CD4-positive, alpha-beta memory T cell (primary cell): ENCODE measurements at regions of chr7 and their contacts with region 1.

Region 1: DNA sequence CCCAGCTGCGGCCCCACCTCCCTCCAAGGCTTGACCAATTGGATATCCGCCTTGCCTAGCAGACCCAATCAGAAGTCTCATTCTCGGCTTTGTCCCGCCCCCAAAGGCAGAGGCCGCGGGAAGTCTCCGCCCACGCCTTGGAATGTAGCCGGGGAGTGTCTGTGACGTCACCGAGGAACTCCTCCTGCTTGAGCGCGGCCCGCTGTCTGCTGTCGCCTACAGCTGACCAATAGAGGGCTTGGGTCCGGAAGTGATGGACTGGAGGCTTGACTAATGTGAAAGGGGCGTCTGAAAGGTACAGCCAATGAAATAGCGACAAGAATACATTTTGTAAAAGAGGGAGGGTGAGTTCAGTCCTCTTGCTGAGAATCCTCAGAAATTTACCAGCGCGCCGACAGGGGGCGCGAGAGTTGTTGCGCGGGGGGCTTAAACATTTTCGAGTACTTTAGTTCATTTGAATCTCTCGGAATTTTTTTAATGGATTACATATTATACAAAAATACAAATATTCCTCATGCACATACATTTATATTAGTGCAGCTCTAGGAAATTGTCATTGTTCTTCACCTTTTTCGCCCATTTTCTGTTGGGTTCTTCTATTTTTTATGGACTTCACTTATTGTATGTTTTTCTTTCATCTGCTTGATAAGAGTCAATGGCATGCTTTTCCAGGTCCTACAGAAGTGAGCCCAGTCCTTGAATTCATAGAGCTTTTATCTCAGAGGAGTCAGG is 376 bp upstream of the CREB3L2 start:
- DNase-seq: peak; percentile 98 to 99 (median 99)
- H3K4me3 ChIP-seq: peak overlapping the region; percentile 86 to 99
- H3K4me3 Mint-ChIP-seq: peak overlapping the region; percentile 93 to 98 (median 95)
- H3K27ac ChIP-seq: peak overlapping the region; percentile 87
- H3K27ac Mint-ChIP-seq: peak overlapping the region; percentile 81 to 98 (median 92)
- H3K4me1 ChIP-seq: peaks cover 37% of the 10 kb centered on the region
- H3K4me1 Mint-ChIP-seq: peaks cover 28 to 50% (median 35%) of the 10 kb centered on the region in 4 donors
- H3K27me3 ChIP-seq: no peaks in the 10 kb centered on the region
- H3K27me3 Mint-ChIP-seq: no peaks in the 10 kb centered on the region

Region 2: DNA sequence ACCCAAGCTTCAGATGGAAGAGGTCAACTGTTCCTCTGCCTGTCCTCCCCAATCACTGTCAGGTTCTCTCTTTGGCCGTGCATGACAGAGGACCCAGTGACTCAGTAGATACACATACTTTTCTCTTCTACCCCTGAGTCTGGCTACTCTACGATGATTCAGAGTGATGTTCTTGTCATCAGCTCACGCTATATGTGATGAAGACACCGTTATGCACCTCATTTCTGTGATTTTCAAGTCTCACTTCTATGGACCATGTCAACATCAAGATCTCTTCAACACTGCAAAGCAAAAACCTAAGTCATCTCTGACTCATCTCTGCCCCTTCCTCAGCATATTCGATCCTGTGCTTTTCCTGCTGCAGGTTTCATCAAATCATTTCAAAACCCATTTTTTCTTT is 78.9 kb before region 1 on chr7:
- CTCF ChIA-PET with region 1: interaction called, 12 read pairs
- POLR2A ChIA-PET with region 1: no interaction called
- intact Hi-C with region 1: no loop called
- DNase-seq: no peak
- H3K4me3 ChIP-seq: no peak overlapping the region
- H3K4me3 Mint-ChIP-seq: no peak overlapping the region
- H3K27ac ChIP-seq: no peak overlapping the region
- H3K27ac Mint-ChIP-seq: peak overlapping the region in 4 of 7 donors; percentile 1 to 39 (median 16)
- H3K4me1 ChIP-seq: peaks cover 21% of the 10 kb centered on the region
- H3K4me1 Mint-ChIP-seq: peaks cover 24 to 57% (median 35%) of the 10 kb centered on the region in 4 donors
- H3K27me3 ChIP-seq: no peaks in the 10 kb centered on the region
- H3K27me3 Mint-ChIP-seq: no peaks in the 10 kb centered on the region

Region 3: DNA sequence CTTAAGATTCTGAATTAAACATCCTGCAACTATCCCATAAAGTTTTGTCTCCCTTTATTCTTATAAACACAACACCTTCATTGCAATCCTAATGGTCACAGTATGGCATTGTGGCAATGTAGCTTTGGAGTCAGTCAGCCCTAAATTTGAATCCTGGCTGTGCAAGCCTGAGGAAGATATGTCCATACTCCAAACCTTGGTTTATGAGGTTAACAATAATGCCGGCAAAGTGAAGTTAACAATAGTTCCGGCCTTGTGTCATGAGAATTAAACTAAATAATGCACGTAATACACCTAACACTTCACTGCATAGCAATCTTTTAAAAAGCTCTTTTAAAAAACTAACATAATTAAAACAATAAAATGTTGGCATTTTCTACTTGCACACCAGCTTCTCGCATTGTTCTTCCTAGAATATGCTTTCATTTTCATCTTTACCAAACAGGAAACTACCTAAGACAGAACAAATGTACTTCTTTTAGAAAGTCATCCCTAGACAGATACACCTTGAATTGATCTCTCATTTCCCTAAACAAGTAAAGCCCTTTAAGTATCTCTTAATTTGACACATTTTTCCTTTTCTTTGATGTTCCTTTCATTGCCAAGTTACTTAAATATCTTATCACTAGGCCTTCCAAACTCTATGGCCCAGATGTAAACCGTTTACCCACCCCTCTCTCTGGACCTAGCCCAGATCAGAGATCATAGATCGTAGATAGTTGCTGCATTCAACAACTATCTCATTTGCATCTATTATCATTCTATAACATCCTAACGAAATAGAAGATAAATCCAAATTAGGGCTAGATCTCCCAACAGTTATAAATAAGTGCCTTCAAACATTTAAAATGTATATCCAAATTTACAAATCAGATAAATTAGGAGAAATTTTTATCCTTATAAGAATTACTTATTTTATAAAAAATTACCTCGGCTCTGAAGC is 67.0 kb before region 1 on chr7:
- CTCF ChIA-PET with region 1: interaction called, 35 read pairs
- POLR2A ChIA-PET with region 1: interaction called, 28 read pairs
- intact Hi-C with region 1: loop called (anchors 2 kb)
- DNase-seq: peak in 4 of 5 donors; percentile 21 to 43 (median 28)
- H3K4me3 ChIP-seq: peak overlapping the region; percentile 19 to 43
- H3K4me3 Mint-ChIP-seq: peak overlapping the region; percentile 88 to 95 (median 90)
- H3K27ac ChIP-seq: peak overlapping the region; percentile 66
- H3K27ac Mint-ChIP-seq: peak overlapping the region; percentile 87 to 98 (median 97)
- H3K4me1 ChIP-seq: peaks cover 35% of the 10 kb centered on the region
- H3K4me1 Mint-ChIP-seq: peaks cover 37 to 70% (median 50%) of the 10 kb centered on the region in 4 donors
- H3K27me3 ChIP-seq: no peaks in the 10 kb centered on the region
- H3K27me3 Mint-ChIP-seq: no peaks in the 10 kb centered on the region

Region 4: DNA sequence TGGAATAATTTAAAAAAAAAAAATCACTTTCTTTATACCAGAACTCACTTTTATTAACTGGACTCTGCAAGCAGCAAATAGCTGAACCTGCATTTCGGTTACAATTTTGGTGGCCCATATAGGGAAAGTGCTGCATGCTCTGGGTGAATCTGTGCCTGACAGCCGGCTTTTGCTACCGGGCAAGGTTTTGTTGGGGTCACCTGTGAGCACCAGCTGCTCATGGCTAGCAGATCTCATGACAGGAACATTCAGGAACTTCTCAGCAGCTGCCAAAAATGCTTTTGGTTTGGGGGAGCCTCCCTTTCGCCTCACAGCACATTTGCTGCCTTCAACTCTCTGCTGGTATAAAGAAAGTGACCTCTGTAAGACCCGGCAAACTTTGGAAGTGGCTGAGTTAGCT is 12.8 kb after region 1 on chr7:
- CTCF ChIA-PET with region 1: interaction called, 36 read pairs
- POLR2A ChIA-PET with region 1: no interaction called
- intact Hi-C with region 1: no loop called
- DNase-seq: no peak
- H3K4me3 ChIP-seq: no peak overlapping the region
- H3K4me3 Mint-ChIP-seq: no peak overlapping the region
- H3K27ac ChIP-seq: no peak overlapping the region
- H3K27ac Mint-ChIP-seq: no peak overlapping the region
- H3K4me1 ChIP-seq: no peaks in the 10 kb centered on the region
- H3K4me1 Mint-ChIP-seq: no peaks in the 10 kb centered on the region
- H3K27me3 ChIP-seq: no peaks in the 10 kb centered on the region
- H3K27me3 Mint-ChIP-seq: no peaks in the 10 kb centered on the region

Region 5: GRCh38 chr7:138032186-138032585 is 29.9 kb after region 1 on chr7:
- CTCF ChIA-PET with region 1: no interaction called
- POLR2A ChIA-PET with region 1: no interaction called
- intact Hi-C with region 1: no loop called
- DNase-seq: no peak
- H3K4me3 ChIP-seq: no peak overlapping the region
- H3K4me3 Mint-ChIP-seq: no peak overlapping the region
- H3K27ac ChIP-seq: no peak overlapping the region
- H3K27ac Mint-ChIP-seq: no peak overlapping the region
- H3K4me1 ChIP-seq: no peaks in the 10 kb centered on the region
- H3K4me1 Mint-ChIP-seq: no peaks in the 10 kb centered on the region
- H3K27me3 ChIP-seq: no peaks in the 10 kb centered on the region
- H3K27me3 Mint-ChIP-seq: peaks cover 4 to 6% of the 10 kb centered on the region in 2 donors

Region 6: GRCh38 chr7:138459413-138460175 is 457.3 kb after region 1 on chr7:
- CTCF ChIA-PET with region 1: no interaction called
- POLR2A ChIA-PET with region 1: no interaction called
- intact Hi-C with region 1: loop called (anchors 1 kb)
- DNase-seq: peak; percentile 98 to 99 (median 98)
- H3K4me3 ChIP-seq: peak overlapping the region in 1 of 2 donors; percentile 49
- H3K4me3 Mint-ChIP-seq: peak overlapping the region; percentile 73 to 94 (median 84)
- H3K27ac ChIP-seq: peak overlapping the region; percentile 2
- H3K27ac Mint-ChIP-seq: peak overlapping the region; percentile 58 to 95 (median 85)
- H3K4me1 ChIP-seq: peaks cover 15% of the 10 kb centered on the region
- H3K4me1 Mint-ChIP-seq: peaks cover 15 to 30% (median 23%) of the 10 kb centered on the region in 4 donors
- H3K27me3 ChIP-seq: no peaks in the 10 kb centered on the region
- H3K27me3 Mint-ChIP-seq: peaks cover 0 to 3% of the 10 kb centered on the region in 2 donors

Region 7: DNA sequence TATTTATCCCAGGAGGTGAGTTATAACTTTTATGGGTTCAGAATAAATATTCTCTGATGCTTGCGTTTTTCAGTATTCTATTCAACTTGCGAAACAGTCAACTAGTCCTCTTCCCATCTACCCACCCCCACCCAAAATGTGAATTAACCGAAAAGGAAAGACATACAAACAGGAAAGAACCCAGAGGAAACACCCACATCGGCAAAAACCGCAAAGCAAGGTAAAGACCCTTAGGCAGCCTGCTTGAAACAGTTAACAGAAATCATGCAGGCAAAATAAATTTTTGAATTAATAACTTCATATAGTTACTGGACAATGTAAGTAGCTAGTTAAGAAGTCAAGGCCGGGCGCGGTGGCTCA is 1101.8 kb after region 1 on chr7:
- CTCF ChIA-PET with region 1: no interaction called
- POLR2A ChIA-PET with region 1: no interaction called
- intact Hi-C with region 1: loop called (anchors 2 kb)
- DNase-seq: peak in 2 of 5 donors; percentile 43 to 64
- H3K4me3 ChIP-seq: peak overlapping the region; percentile 27 to 96
- H3K4me3 Mint-ChIP-seq: peak overlapping the region; percentile 95 to 98 (median 97)
- H3K27ac ChIP-seq: peak overlapping the region; percentile 42
- H3K27ac Mint-ChIP-seq: peak overlapping the region; percentile 84 to 96 (median 92)
- H3K4me1 ChIP-seq: peaks cover 29% of the 10 kb centered on the region
- H3K4me1 Mint-ChIP-seq: peaks cover 12 to 55% (median 23%) of the 10 kb centered on the region in 4 donors
- H3K27me3 ChIP-seq: no peaks in the 10 kb centered on the region
- H3K27me3 Mint-ChIP-seq: no peaks in the 10 kb centered on the region